ENCODE measurements at regions of chr7 and their contacts with region 1.

Region 1: GRCh38 chr7:130689683-130690082 is 3.3 kb upstream of the TSGA13 start:
- DNase-seq: no peak
- ATAC-seq: no peak
- H3K4me3 ChIP-seq: no peak overlapping the region
- H3K4me3 Mint-ChIP-seq: no peak overlapping the region
- H3K27ac ChIP-seq: no peak overlapping the region
- H3K27ac Mint-ChIP-seq: no peak overlapping the region
- H3K4me1 ChIP-seq: no peaks in the 10 kb centered on the region
- H3K4me1 Mint-ChIP-seq: no peaks in the 10 kb centered on the region
- H3K27me3 ChIP-seq: peaks cover 0 to 6% of the 10 kb centered on the region in 2 experiments
- H3K27me3 Mint-ChIP-seq: peaks cover 1 to 3% of the 10 kb centered on the region in 2 donors

Region 2: GRCh38 chr7:130649004-130649790 is 40.5 kb before region 1 on chr7:
- CTCF ChIA-PET with region 1: no interaction called
- POLR2A ChIA-PET with region 1: no interaction called
- DNase-seq: no peak
- ATAC-seq: no peak
- H3K4me3 ChIP-seq: no peak overlapping the region
- H3K4me3 Mint-ChIP-seq: no peak overlapping the region
- H3K27ac ChIP-seq: no peak overlapping the region
- H3K27ac Mint-ChIP-seq: no peak overlapping the region
- H3K4me1 ChIP-seq: no peaks in the 10 kb centered on the region
- H3K4me1 Mint-ChIP-seq: peaks cover 0 to 3% (median 0%) of the 10 kb centered on the region in 3 donors
- H3K27me3 ChIP-seq: no peaks in the 10 kb centered on the region
- H3K27me3 Mint-ChIP-seq: no peaks in the 10 kb centered on the region

Region 3: DNA sequence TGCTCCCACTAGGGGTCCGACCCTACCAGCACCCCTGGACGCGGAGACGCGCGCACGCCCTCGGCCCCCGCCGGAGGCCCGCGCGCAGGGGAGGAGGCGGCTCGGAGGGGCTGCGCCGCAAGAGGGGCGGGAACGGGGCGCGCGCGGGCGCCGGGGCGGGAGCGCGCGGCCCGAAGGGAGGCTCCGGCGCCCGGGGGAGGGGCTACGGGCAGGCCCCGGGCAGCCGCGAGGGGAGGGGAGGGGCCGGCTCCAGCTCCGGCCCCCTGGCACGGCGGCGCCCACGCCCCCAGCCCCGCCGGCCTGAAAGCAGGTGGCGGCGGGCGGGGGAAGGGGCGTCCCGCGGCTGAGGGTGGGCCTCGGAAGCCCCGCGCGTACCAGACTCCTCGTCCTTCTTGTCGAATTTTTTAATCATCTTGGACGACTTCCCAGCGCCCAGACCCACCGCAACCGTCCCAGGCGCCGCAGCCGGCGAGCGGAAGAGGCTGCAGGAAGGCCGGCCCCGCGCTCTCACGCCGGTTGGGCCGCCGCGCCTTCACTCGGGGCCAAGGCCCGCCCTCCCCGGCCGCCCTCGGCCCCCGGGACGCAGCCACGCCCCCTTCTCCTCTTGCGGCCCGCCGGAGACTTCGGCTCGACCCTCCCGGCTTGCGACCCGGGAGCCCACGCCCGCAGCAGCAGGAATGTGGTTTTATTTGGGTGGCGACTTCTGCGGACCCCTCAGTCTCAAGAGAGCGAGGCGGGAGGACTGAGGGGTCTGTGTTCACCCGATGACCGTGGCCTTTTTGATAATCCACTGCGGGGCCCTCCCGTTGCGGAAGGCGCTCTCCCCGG is 21.2 kb before region 1 on chr7 and contains the start of gene COPG2:
- CTCF ChIA-PET with region 1: no interaction called
- POLR2A ChIA-PET with region 1: no interaction called
- DNase-seq: peak; percentile 3 to 82 (median 43)
- ATAC-seq: peak; percentile 89 to 92 (median 90)
- H3K4me3 ChIP-seq: peak within 1 kb of the TSS; percentile 72 to 77
- H3K4me3 Mint-ChIP-seq: peak within 1 kb of the TSS; percentile 87 to 89 (median 89)
- H3K27ac ChIP-seq: peak within 1 kb of the TSS; percentile 46
- H3K27ac Mint-ChIP-seq: peak within 1 kb of the TSS; percentile 78 to 90
- H3K4me1 ChIP-seq: peaks cover 0 to 11% of the 10 kb centered on the region in 2 experiments
- H3K4me1 Mint-ChIP-seq: peaks cover 17 to 19% (median 19%) of the 10 kb centered on the region in 3 donors
- H3K27me3 ChIP-seq: no peaks in the 10 kb centered on the region
- H3K27me3 Mint-ChIP-seq: peaks cover 0 to 8% of the 10 kb centered on the region in 2 donors
- total RNA-seq, gene COPG2: 7.7 to 10.4 (median 8.5) TPM

Region 4: GRCh38 chr7:130853503-130854279 is 164.0 kb after region 1 on chr7:
- CTCF ChIA-PET with region 1: no interaction called
- POLR2A ChIA-PET with region 1: no interaction called
- DNase-seq: no peak
- ATAC-seq: no peak
- H3K4me3 ChIP-seq: no peak overlapping the region
- H3K4me3 Mint-ChIP-seq: no peak overlapping the region
- H3K27ac ChIP-seq: no peak overlapping the region
- H3K27ac Mint-ChIP-seq: no peak overlapping the region
- H3K4me1 ChIP-seq: no peaks in the 10 kb centered on the region
- H3K4me1 Mint-ChIP-seq: no peaks in the 10 kb centered on the region
- H3K27me3 ChIP-seq: no peaks in the 10 kb centered on the region
- H3K27me3 Mint-ChIP-seq: no peaks in the 10 kb centered on the region

Region 5: DNA sequence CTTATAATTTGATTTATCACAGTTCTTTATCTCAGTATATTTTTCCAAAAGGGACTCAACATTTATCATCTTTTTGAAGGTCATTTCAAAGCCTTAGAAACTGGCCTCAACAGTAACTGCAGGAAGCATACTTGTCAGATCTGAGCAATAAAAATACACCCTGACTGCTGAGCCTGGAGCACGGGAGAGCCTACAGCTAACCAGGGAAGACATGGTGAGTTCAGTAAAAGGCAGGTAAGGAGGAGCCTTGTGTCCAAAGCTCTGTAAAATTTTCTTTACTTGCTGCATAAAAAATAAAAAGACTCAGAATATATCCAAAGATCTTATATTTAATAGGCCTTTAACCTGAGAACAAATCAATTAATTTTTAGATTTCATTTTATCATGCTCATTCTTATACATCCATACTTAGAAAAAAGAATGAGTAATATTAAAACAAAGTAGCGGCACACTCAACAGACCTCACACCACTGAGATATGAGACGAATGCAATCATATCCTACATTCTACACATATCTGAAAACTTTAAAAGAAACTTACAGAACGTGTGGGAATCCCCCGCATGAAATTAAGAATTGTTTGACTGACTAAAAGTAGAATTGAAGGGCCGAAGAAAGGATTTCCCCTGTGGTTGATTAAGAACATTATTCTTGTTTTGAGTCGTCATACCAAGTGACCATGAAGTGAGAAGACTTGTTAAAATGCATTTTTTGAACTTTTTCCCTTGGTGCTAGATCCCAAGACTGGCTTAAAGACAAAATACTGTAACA is 341.6 kb after region 1 on chr7:
- CTCF ChIA-PET with region 1: no interaction called
- POLR2A ChIA-PET with region 1: no interaction called
- DNase-seq: peak in 1 of 35 experiments; percentile 47
- ATAC-seq: no peak
- H3K4me3 ChIP-seq: no peak overlapping the region
- H3K4me3 Mint-ChIP-seq: peak overlapping the region; percentile 59 to 62 (median 61)
- H3K27ac ChIP-seq: peak overlapping the region; percentile 22
- H3K27ac Mint-ChIP-seq: peak overlapping the region; percentile 66 to 70
- H3K4me1 ChIP-seq: peaks cover 0 to 60% of the 10 kb centered on the region in 2 experiments
- H3K4me1 Mint-ChIP-seq: peaks cover 88 to 93% (median 90%) of the 10 kb centered on the region in 3 donors
- H3K27me3 ChIP-seq: no peaks in the 10 kb centered on the region
- H3K27me3 Mint-ChIP-seq: no peaks in the 10 kb centered on the region

Region 6: DNA sequence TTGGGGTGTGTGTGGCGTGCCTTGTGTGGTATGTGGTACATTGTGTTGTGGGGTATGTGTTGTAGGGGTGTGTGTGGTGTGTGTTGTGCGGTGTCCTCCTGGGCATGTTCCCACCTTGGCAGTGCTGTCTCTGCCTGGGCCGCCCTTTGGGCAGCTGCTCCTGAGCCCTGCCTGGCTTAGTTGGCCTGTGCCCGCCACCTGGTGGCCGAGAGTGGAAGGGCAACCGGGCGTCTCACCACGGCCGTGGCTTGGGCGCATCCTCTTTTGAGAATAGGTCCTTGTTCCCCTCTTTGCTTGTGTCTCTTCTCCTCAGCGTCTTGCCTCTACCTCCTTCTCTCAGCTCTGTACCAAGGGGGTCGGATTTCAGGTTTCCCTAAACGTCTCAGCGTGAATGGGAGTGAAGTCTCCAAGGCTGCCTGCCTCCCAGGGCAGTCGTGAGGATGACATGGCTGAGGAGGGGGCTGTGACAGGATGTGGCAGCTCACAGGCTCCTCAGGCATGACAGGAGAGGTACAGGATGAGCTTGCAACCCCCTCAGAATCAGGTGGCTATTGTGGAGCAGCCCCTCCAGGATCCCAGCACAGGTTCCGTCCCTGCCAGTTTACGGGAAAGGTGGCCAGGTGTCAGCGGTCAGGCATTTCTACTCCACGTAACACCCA is 965.1 kb after region 1 on chr7:
- CTCF ChIA-PET with region 1: interaction called in 1 of 2 experiments, 10 read pairs
- POLR2A ChIA-PET with region 1: no interaction called
- DNase-seq: peak; percentile 38 to 84 (median 71)
- ATAC-seq: peak; percentile 71 to 92 (median 78)
- H3K4me3 ChIP-seq: no peak overlapping the region
- H3K4me3 Mint-ChIP-seq: no peak overlapping the region
- H3K27ac ChIP-seq: no peak overlapping the region
- H3K27ac Mint-ChIP-seq: no peak overlapping the region
- H3K4me1 ChIP-seq: peaks cover 0 to 5% of the 10 kb centered on the region in 2 experiments
- H3K4me1 Mint-ChIP-seq: peaks cover 0 to 2% (median 0%) of the 10 kb centered on the region in 3 donors
- H3K27me3 ChIP-seq: peaks cover 0 to 20% of the 10 kb centered on the region in 2 experiments
- H3K27me3 Mint-ChIP-seq: peaks cover 3 to 9% of the 10 kb centered on the region in 2 donors

Measured in T-cell (primary cell).